ENCODE measurements at regions of chr10 and their contacts with region 1.

Region 1: GRCh38 chr10:62732841-62733653 is 71.5 kb upstream of the ADO start:
- DNase-seq: peak; percentile 100
- ATAC-seq: peak; percentile 86
- H3K4me3 ChIP-seq: peak overlapping the region; percentile 18
- H3K27ac ChIP-seq: peak overlapping the region; percentile 84
- H3K4me1 ChIP-seq: peaks cover 60% of the 10 kb centered on the region
- H3K27me3 ChIP-seq: no peaks in the 10 kb centered on the region
- CTCF ChIP-seq: no peak

Region 2: DNA sequence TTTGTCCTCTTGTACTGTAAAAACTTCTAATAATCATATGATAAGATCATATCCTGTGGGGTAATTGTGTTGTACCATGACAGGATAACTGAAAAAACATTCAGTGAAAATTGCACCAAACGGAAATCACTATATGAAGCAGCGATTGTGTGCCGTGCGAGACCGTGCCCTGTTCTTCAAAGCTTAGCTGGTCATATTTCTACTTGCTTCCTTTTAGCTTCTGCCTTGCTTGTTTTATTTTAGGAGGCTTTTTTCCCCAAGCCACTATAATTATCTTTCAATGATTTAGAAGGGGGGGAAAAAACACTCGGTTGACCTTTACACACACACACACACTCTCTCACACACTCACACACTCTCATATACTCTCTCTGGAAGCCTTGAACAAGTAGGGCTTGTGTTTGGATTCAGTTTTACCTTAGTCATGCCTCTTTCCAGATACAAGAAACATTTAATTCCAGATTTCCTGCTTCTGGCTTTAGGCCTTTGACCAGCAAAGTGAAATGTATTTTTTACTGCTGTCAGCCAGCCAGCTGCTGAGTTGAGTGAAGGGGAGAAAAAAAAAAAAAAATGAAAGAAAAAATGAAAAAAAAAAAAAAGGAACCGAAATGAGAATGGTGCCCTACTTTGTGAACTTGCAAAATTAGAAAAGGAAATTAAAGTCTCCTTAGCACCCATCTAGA is 650.2 kb before region 1 on chr10:
- CTCF ChIA-PET with region 1: no interaction called
- POLR2A ChIA-PET with region 1: no interaction called
- intact Hi-C with region 1: no loop called
- DNase-seq: peak; percentile 69
- ATAC-seq: peak; percentile 58
- H3K4me3 ChIP-seq: peak overlapping the region; percentile 24
- H3K27ac ChIP-seq: peak overlapping the region; percentile 54
- H3K4me1 ChIP-seq: peaks cover 53% of the 10 kb centered on the region
- H3K27me3 ChIP-seq: no peaks in the 10 kb centered on the region
- CTCF ChIP-seq: no peak

Region 3: DNA sequence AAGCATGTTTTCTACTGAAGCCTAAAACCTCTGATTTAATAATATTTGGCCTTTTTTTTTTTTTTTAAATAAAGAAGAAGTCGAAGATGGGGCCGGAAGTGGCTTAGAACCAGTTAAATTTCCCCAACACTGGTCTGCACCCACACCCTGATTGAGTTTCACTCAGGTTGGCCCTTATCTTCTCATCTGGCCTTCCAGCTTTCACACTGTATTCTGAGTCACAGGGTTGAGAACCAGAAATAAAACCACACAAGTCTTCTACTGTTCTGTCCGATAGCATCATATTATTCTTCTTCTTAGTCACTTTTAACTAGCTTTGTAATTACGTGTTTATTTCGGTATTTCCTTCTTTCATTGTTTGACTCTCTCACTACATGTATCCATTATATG is 349.0 kb before region 1 on chr10:
- CTCF ChIA-PET with region 1: no interaction called
- POLR2A ChIA-PET with region 1: no interaction called
- intact Hi-C with region 1: loop called (anchors 1 kb)
- DNase-seq: peak; percentile 100
- ATAC-seq: peak; percentile 74
- H3K4me3 ChIP-seq: peak overlapping the region; percentile 36
- H3K27ac ChIP-seq: peak overlapping the region; percentile 79
- H3K4me1 ChIP-seq: peaks cover 88% of the 10 kb centered on the region
- H3K27me3 ChIP-seq: no peaks in the 10 kb centered on the region
- CTCF ChIP-seq: no peak

Region 4: DNA sequence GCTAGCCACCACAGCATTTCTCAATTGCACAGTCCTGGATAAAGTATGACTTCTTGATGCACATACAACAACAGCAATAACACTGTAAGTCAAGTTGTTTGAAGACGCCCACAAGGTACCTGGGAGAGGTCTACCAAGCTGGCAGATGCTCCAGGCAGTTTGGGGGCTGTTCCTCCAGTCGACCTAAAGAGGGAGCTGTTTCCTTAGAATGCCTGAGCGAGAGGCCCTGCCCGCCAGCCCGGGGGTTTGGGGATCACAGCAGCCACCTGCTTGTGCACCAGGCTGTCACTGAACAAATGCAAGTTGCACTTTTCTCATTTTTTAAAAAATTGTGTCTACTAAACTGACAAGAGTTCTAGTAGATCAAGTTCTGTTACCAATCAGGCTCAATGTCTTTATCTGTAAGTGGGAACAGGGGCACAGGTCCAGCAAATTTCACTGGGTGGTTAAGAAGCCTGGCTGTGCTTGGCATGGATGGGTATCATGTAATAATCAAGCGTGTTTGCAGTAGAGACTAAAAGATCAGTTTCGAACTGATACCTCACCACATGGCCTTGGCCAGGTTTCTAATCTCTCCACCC is 122.3 kb before region 1 on chr10:
- CTCF ChIA-PET with region 1: interaction called, 4 read pairs
- POLR2A ChIA-PET with region 1: no interaction called
- intact Hi-C with region 1: loop called (anchors 2 kb)
- DNase-seq: peak; percentile 99
- ATAC-seq: peak; percentile 72
- H3K4me3 ChIP-seq: no peak overlapping the region
- H3K27ac ChIP-seq: no peak overlapping the region
- H3K4me1 ChIP-seq: peaks cover 29% of the 10 kb centered on the region
- H3K27me3 ChIP-seq: no peaks in the 10 kb centered on the region
- CTCF ChIP-seq: peak; percentile 100

Region 5: DNA sequence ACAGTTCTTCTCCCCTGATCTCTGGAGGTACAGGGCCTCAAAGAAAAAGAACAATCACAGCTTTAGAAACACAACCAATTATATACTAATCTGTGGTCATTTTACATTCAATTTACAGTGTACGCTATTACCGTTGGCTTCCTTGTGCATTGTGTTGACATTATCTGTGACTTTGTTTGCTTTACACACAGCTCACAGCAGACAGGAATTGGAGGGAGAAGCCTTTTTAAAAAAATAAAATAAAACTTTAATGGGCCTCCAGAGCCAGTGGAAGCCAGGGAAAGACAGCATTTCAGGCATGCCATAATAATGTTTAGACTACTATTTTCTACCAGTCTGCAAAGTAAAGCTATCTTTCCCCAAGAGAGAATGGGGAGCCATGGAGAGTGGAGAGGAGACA is 107.6 kb before region 1 on chr10:
- CTCF ChIA-PET with region 1: interaction called, 3 read pairs
- POLR2A ChIA-PET with region 1: no interaction called
- intact Hi-C with region 1: loop called (anchors 1 kb)
- DNase-seq: peak; percentile 93
- ATAC-seq: peak; percentile 82
- H3K4me3 ChIP-seq: peak overlapping the region; percentile 5; the same call in 1 of the 2 replicates
- H3K27ac ChIP-seq: peak overlapping the region; percentile 73
- H3K4me1 ChIP-seq: peaks cover 44% of the 10 kb centered on the region
- H3K27me3 ChIP-seq: no peaks in the 10 kb centered on the region
- CTCF ChIP-seq: no peak

Region 6: GRCh38 chr10:62794306-62794705 is 61.3 kb after region 1 on chr10:
- CTCF ChIA-PET with region 1: no interaction called
- POLR2A ChIA-PET with region 1: no interaction called
- intact Hi-C with region 1: loop called (anchors 2 kb)
- DNase-seq: peak; percentile 96
- ATAC-seq: peak; percentile 97
- H3K4me3 ChIP-seq: peak overlapping the region; percentile 0; the same call in 1 of the 2 replicates
- H3K27ac ChIP-seq: peak overlapping the region; percentile 2
- H3K4me1 ChIP-seq: peaks cover 14% of the 10 kb centered on the region
- H3K27me3 ChIP-seq: no peaks in the 10 kb centered on the region
- CTCF ChIP-seq: no peak

Region 7: GRCh38 chr10:62804356-62805230 is 71.5 kb after region 1 on chr10 and contains the start of gene ADO:
- CTCF ChIA-PET with region 1: interaction called, 3 read pairs
- POLR2A ChIA-PET with region 1: no interaction called
- intact Hi-C with region 1: loop called (anchors 1 kb)
- DNase-seq: peak; percentile 97
- ATAC-seq: peak; percentile 82
- H3K4me3 ChIP-seq: peak within 1 kb of the TSS; percentile 79
- H3K27ac ChIP-seq: peak within 1 kb of the TSS; percentile 60
- H3K4me1 ChIP-seq: peaks cover 37% of the 10 kb centered on the region
- H3K27me3 ChIP-seq: no peaks in the 10 kb centered on the region
- CTCF ChIP-seq: no peak
- total RNA-seq, gene ADO: 107 and 129 TPM in 2 replicates